IMR-90 (cell line): ENCODE measurements at regions of chr12 and their contacts with region 1.

Region 1: DNA sequence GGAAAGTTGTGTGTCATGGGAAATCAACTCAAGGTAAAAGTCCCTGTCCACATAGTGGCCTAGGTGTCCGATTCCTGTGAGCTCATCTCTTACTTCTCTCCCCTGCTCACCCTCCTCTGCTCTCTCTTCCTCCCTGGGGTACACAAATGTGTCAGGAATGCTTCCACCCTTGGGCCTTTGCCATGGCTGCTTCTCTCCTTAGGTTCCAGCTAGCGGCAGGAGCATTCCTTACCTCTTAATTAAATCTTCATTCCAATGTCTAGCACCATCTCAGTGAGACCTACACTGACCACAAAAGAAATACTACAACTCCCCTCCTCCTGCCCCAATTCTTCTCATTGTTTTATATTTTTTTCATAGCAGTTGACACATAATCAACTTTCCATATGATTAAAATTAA is 298.6 kb downstream of the PDZRN4 start:
- DNase-seq: peak; percentile 27
- ATAC-seq: peak; percentile 11; the same call in 1 of the 2 replicates
- H3K4me3 ChIP-seq: no peak overlapping the region
- H3K27ac ChIP-seq: no peak overlapping the region
- H3K4me1 ChIP-seq: no peaks in the 10 kb centered on the region
- H3K27me3 ChIP-seq: no peaks in the 10 kb centered on the region
- CTCF ChIP-seq: no peak
- POLR2A ChIP-seq: no peak
- RAD21 ChIP-seq: no peak

Region 2: GRCh38 chr12:41509271-41510054 is 22.7 kb after region 1 on chr12:
- CTCF ChIA-PET with region 1: no interaction called
- POLR2A ChIA-PET with region 1: no interaction called
- dilution Hi-C with region 1: no loop called
- in situ Hi-C with region 1: no loop called
- intact Hi-C with region 1: loop called (anchors 1 kb)
- DNase-seq: no peak
- ATAC-seq: no peak
- H3K4me3 ChIP-seq: no peak overlapping the region
- H3K27ac ChIP-seq: no peak overlapping the region
- H3K4me1 ChIP-seq: no peaks in the 10 kb centered on the region
- H3K27me3 ChIP-seq: peaks cover 1% of the 10 kb centered on the region
- CTCF ChIP-seq: no peak
- POLR2A ChIP-seq: no peak
- RAD21 ChIP-seq: no peak